ENCODE measurements at regions of chr14 and their contacts with region 1.

Region 1: DNA sequence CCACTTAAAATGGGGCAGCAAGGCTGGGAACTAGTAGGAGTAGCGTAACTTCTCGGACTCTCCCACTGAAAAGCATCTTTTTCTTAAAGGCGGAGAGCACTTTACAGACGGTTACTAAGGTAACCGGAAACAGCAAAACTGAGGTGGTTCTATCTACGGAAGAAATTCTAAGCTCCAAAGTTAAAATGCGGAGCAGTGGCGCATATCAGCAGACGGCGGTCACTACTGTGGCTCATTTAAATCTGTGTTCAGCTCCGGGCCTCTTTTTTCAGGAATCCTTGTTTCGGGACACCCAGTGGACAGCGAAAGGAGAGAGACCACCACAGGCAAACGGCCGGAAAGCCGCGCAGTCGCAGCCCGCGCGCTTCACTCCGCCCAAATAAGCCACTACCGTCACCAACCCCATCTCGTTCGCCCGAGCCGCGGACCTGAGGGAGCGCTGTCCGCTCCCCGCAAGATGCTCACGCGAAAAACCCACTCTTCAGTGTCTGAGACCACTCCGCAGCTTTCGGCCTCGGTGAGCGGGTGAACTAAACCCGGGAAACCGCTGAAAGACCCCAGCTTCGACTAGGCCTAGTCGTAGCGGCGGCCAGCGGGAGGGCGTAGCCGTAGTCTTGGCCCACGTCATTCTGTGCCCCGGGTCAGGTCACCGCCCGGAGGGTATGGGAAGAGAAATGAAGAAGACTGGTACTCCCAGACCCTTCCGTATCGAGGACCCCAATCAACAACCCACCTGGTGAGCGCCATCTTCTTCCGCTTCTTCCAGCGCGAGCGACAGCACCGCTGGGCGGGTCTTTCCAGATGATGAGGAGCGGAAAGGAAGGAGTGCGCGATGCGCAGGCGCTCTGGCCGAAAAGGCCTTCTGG is at the start of gene SNW1:
- DNase-seq: peak; percentile 82 to 96 (median 90)
- ATAC-seq: peak; percentile 89
- H3K4me3 Mint-ChIP-seq: peak within 1 kb of the TSS; percentile 93 to 98 (median 96)
- H3K27ac Mint-ChIP-seq: peak within 1 kb of the TSS; percentile 94 to 99 (median 99)
- H3K4me1 Mint-ChIP-seq: peaks cover 17 to 52% (median 42%) of the 10 kb centered on the region in 4 donors
- H3K27me3 Mint-ChIP-seq: no peaks in the 10 kb centered on the region
- polyA plus RNA-seq, gene SNW1: 60.4 to 69.5 (median 61.9) TPM

Region 2: GRCh38 chr14:77799863-77800730 is 39.5 kb after region 1 on chr14 and contains the start of gene ADCK1:
- POLR2A ChIA-PET with region 1: interaction called, 15 read pairs
- DNase-seq: peak; percentile 69 to 91 (median 80)
- ATAC-seq: peak; percentile 91 to 92
- H3K4me3 Mint-ChIP-seq: peak within 1 kb of the TSS; percentile 84 to 91 (median 87)
- H3K27ac Mint-ChIP-seq: peak within 1 kb of the TSS; percentile 66 to 93 (median 88)
- H3K4me1 Mint-ChIP-seq: peaks cover 3 to 28% (median 14%) of the 10 kb centered on the region in 4 donors
- H3K27me3 Mint-ChIP-seq: no peaks in the 10 kb centered on the region
- polyA plus RNA-seq, gene ADCK1: 5.2 to 7.0 (median 6.8) TPM

Region 3: DNA sequence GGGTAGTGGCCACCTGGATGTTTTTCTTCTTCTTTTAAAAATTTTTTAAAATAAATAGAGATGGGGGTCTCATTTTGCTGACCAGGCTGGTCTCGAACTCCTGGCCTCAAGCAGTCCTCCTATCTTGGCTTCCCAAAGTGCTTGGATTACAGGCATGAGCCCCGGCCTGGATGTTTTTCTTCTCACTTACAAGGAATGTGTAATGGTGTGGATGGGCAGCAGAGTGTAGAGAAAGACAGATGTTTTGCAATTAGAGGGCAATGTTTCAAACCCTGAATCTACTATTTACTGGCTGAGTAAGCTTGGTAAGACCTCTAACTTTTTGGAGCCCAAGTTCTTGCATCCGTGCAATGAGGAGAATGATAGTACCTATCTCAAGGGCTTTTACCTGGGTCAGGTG is 87.4 kb after region 1 on chr14:
- POLR2A ChIA-PET with region 1: no interaction called
- DNase-seq: no peak
- ATAC-seq: no peak
- H3K4me3 Mint-ChIP-seq: no peak overlapping the region
- H3K27ac Mint-ChIP-seq: peak overlapping the region in 2 of 10 donors; percentile 6 to 13
- H3K4me1 Mint-ChIP-seq: peaks cover 0 to 13% (median 0%) of the 10 kb centered on the region in 4 donors
- H3K27me3 Mint-ChIP-seq: no peaks in the 10 kb centered on the region

Region 4: DNA sequence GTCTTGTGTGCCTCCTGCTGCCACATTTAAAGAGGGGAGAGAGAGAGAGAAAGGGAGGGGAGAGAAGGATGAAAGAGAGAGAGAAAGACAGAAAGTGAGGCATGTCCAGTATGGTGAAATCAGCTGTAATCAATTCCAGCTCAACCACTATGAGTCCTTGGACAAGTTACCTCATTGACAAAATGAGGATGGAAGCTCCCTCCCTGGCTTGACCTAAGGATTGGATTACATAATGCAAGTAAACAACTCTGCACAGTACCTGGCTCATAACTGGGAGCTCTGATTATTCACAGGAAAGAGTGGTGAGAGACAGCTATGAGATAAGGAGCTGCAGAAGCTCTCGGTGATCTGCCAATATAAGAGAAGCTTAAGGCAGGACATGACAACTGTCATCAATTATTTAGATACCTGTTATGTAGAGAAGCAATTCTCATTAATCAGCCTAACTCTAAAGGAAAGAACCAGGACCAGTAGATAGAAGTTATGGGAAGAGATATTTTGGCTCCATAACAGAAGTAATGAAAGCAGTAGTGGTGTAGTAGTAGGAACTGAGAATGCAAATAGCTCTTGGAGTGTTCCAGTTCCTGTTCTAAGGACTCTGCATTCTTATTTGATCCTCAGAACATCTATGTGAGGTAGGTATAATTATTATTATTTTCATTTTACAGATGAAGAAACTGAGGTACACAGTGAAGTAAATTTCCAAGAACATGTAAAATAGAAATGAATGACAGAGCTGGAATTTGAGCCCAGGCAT is 1659.1 kb after region 1 on chr14:
- POLR2A ChIA-PET with region 1: no interaction called
- DNase-seq: no peak
- ATAC-seq: no peak
- H3K4me3 Mint-ChIP-seq: no peak overlapping the region
- H3K27ac Mint-ChIP-seq: no peak overlapping the region
- H3K4me1 Mint-ChIP-seq: no peaks in the 10 kb centered on the region
- H3K27me3 Mint-ChIP-seq: peaks cover 0 to 4% (median 0%) of the 10 kb centered on the region in 5 donors

Measured in naive thymus-derived CD8-positive, alpha-beta T cell (primary cell).